ENCODE measurements at regions of chr1 and their contacts with region 1.

Region 1: GRCh38 chr1:100265931-100266740 is at the start of gene RTCA:
- DNase-seq: peak; percentile 98
- H3K4me3 Mint-ChIP-seq: peak within 1 kb of the TSS; percentile 90
- H3K27ac Mint-ChIP-seq: peak within 1 kb of the TSS; percentile 85
- H3K4me1 Mint-ChIP-seq: peaks cover 10% of the 10 kb centered on the region
- H3K27me3 Mint-ChIP-seq: no peaks in the 10 kb centered on the region
- CTCF ChIP-seq: no peak
- total RNA-seq, gene RTCA: 60.4 and 62.3 TPM in 2 replicates

Region 2: DNA sequence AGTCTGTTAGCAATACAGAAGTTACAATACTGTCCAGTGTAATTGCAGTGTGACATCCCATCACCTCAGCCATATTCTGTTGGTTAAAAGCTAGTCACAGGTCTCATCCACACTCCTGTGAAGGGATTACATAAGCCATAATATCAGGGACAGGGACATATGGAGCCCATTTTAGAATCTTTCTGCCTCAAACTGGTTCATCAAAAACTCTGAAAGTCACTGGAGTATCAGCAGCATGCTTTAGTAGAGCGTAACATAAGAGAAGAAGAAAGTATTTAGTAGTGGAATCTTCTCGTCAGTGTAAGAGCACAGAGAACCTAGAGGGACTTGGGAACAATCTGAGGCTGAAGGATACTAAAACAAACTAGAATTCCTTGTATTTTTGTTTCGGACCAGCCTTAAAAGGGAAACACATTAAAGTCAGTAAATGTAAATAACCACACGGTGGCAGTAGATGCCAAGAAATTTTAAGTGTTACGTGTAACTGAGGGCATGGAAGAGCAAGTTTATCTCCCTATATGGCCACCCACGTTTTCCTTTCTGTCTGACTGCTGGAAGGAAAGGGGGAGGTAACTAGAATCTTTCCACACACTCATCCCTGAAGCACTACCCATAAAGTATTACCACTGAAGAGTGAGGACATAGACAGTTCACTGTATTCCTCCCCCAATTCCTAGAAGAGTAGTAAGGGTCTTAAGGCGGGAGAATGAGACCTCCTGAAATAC is 457.6 kb before region 1 on chr1:
- CTCF ChIA-PET with region 1: no interaction called
- POLR2A ChIA-PET with region 1: no interaction called
- intact Hi-C with region 1: loop called (anchors 1 kb)
- DNase-seq: peak; percentile 90
- H3K4me3 Mint-ChIP-seq: no peak overlapping the region
- H3K27ac Mint-ChIP-seq: no peak overlapping the region
- H3K4me1 Mint-ChIP-seq: no peaks in the 10 kb centered on the region
- H3K27me3 Mint-ChIP-seq: no peaks in the 10 kb centered on the region
- CTCF ChIP-seq: peak; percentile 49

Region 3: DNA sequence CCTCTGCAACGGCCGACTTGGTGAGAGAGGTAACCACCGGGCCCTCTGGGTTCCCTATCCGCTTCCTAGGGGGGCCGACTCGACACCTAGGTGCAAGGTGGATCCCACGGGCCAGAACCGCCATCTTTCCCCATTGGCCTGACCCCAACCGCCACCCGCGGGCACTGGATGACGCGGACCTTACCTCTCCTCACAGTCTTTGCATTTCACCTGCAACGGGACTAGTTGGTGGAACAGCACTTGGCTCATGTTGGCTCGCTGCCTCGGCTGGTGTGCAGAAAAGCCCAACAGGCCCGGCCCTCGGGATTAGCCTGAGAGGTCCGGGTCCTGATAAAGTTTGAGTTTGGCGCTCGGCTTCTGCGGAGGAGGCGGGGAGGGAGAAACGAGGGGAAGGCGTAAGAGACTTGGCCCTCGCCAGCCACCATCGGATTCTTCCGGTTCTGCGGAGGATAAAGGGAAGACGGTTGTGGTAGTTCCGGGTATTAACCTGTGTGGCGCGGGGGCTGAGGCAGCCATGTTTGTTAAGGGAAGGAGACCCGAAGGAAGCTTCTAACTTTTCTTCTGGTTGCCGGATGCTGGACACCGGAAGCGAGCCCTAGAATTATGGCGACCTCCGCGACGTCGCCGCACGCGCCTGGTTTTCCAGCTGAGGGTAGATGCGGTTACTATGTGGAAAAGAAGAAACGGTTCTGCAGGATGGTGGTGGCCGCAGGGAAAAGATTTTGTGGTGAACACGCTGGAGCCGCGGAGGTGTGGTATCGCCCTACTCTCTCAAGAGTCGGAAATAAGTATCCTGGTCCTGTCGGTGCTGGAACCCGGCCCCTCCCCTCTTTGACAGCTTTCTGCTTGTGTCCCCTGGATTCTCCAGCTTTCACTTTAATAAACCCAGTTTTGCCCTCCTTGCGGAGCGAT is 133.3 kb before region 1 on chr1 and contains the starts of genes SASS6 and TRMT13:
- CTCF ChIA-PET with region 1: interaction called, 3 read pairs
- POLR2A ChIA-PET with region 1: interaction called, 9 read pairs
- intact Hi-C with region 1: loop called (anchors 2 kb)
- DNase-seq: peak; percentile 98
- H3K4me3 Mint-ChIP-seq: peak within 1 kb of the TSS; percentile 86
- H3K27ac Mint-ChIP-seq: peak within 1 kb of the TSS; percentile 75
- H3K4me1 Mint-ChIP-seq: peaks cover 19% of the 10 kb centered on the region
- H3K27me3 Mint-ChIP-seq: no peaks in the 10 kb centered on the region
- CTCF ChIP-seq: no peak
- total RNA-seq, gene SASS6: 6.6 and 7.5 TPM in 2 replicates
- total RNA-seq, gene TRMT13: 24.2 and 25.5 TPM in 2 replicates

Region 4: DNA sequence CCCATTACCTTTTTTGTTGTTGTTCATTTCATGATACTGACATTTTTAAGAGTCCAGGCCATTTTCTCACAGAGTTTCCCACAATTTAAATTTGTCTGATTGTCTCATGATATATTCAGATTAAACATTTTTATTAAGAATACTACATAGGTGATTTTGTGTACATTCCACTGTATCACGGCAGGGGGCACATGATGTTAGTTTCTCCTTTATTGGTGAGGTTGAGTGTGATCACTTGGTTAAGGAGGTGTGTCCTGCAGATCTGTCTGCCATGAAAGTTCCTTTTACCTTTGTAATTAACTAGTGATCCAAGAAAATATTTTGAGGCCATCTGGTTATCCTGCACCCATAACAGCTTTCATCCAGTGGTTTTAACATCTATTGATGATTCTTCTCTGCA is 11.7 kb after region 1 on chr1:
- CTCF ChIA-PET with region 1: interaction called, 5 read pairs
- POLR2A ChIA-PET with region 1: interaction called, 13 read pairs
- intact Hi-C with region 1: no loop called
- DNase-seq: peak; percentile 38
- H3K4me3 Mint-ChIP-seq: no peak overlapping the region
- H3K27ac Mint-ChIP-seq: no peak overlapping the region
- H3K4me1 Mint-ChIP-seq: peaks cover 4% of the 10 kb centered on the region
- H3K27me3 Mint-ChIP-seq: no peaks in the 10 kb centered on the region
- CTCF ChIP-seq: no peak

Region 5: DNA sequence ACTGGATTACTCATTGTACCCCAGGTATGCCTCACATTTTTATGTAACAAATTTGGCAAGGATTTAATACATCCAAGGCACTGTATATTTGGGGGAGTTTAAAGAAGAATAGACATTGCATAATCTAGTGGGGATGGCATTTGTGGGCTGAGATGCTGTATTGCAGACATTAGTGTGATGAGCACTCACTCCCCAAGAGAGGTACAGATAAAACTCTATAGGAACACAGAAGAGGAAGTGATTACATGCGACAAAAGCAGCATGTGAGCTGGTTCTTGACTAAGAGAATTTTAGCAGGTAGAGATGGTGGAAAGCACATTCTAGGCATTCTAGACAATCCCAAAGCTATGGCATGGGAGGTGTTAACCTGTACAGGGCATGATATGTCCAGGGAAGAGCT is 62.0 kb after region 1 on chr1:
- CTCF ChIA-PET with region 1: no interaction called
- POLR2A ChIA-PET with region 1: no interaction called
- intact Hi-C with region 1: no loop called
- DNase-seq: no peak
- H3K4me3 Mint-ChIP-seq: no peak overlapping the region
- H3K27ac Mint-ChIP-seq: no peak overlapping the region
- H3K4me1 Mint-ChIP-seq: peaks cover 5% of the 10 kb centered on the region
- H3K27me3 Mint-ChIP-seq: no peaks in the 10 kb centered on the region
- CTCF ChIP-seq: no peak

Region 6: GRCh38 chr1:100358210-100358609 is 92.1 kb after region 1 on chr1:
- CTCF ChIA-PET with region 1: interaction called, 10 read pairs
- POLR2A ChIA-PET with region 1: interaction called, 67 read pairs
- intact Hi-C with region 1: no loop called
- DNase-seq: peak; percentile 25
- H3K4me3 Mint-ChIP-seq: no peak overlapping the region
- H3K27ac Mint-ChIP-seq: no peak overlapping the region
- H3K4me1 Mint-ChIP-seq: peaks cover 21% of the 10 kb centered on the region
- H3K27me3 Mint-ChIP-seq: no peaks in the 10 kb centered on the region
- CTCF ChIP-seq: no peak

Measured in MCF 10A (cell line).